ENCODE measurements at regions of chr6 and their contacts with region 1.

Region 1: GRCh38 chr6:2853761-2854395 is 12.2 kb upstream of the SERPINB1 start:
- DNase-seq: no peak
- ATAC-seq: peak; percentile 21

Region 2: GRCh38 chr6:2818593-2818992 is 35.3 kb before region 1 on chr6:
- intact Hi-C with region 1: no loop called
- DNase-seq: no peak
- ATAC-seq: peak; percentile 54

Region 3: DNA sequence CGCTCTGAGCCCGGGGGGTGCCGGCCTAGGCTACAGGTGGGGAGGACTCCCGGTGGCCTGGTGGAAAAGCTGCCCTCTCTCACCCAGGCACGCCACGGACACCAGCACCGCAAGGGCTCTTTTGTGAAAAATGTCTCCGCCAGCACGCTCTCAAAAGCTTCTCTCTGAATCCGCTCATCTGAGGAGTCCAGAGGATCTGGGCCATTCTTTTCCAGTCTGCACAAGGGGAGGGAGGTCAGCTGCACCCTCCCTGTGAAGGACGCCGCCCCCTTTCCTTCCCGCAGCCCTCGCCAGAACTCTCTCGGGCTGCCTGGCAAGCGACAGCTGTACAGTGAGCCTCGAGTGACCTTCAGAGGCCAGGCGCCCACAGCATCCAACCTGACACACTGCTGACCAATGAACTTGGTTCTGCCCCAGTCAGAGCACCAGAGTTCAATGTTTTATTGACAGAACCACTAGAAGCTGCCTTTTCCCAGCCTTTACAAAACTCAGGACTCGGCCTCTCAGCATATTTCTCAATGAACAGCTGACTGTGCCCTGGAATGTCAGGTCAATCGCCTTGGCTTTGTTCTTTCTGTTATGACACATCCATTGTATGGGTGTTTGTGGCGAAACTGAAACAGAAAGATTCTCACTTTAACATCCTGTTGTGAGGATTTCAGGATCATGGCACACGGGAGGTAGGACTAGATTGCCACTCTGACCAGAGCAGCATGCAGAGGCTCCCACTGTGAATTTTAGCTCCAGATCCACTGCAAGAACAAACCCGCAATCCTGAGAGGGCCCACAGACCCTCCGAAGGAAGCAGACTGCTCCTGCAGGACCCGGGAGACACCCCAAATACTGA is 22.6 kb after region 1 on chr6:
- intact Hi-C with region 1: loop called (anchors 2 kb)
- DNase-seq: peak; percentile 85
- ATAC-seq: peak; percentile 87

Region 4: GRCh38 chr6:2900821-2901644 is 47.2 kb after region 1 on chr6:
- intact Hi-C with region 1: loop called (anchors 5 kb)
- DNase-seq: no peak
- ATAC-seq: no peak

Region 5: DNA sequence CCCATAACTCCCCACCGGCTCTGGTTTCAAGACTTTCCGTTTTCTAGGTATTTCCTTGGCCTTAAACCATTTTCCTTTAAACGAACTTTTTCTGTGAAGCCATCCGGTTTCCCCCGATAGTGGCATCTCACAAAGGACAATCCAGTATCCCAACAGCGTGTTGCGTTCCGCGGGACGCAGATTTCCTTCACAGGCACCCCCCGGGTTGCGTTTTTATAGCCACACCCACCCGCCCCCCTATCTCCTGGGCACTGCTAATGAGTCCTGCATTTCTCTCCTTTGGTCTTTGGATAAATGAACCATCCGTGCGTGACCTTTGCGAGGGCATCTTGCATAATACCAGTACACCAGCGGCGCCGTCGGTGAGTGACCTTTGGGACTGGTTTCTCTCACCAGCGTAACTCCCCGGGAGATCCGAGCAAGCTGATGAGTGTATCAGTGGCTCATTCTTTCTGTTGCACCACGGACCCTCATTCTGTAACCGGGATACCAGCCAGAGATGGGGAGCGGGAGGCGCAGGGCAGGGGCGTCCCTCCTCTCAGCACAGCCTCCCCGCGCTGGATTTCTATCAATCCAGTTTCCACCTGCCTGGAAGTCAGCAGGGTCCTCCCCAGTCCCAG is 145.2 kb after region 1 on chr6:
- intact Hi-C with region 1: no loop called
- DNase-seq: no peak
- ATAC-seq: no peak

Region 6: GRCh38 chr6:3356056-3356761 is 502.3 kb after region 1 on chr6:
- intact Hi-C with region 1: no loop called
- DNase-seq: no peak
- ATAC-seq: peak; percentile 73